ENCODE measurements at regions of chr1 and their contacts with region 1.

Region 1: GRCh38 chr1:110060034-110060661 is 10.3 kb downstream of the ALX3 start:
- DNase-seq: peak; percentile 81
- ATAC-seq: peak; percentile 85
- H3K4me3 Mint-ChIP-seq: no peak overlapping the region
- H3K27ac Mint-ChIP-seq: no peak overlapping the region
- H3K4me1 Mint-ChIP-seq: peaks cover 2% of the 10 kb centered on the region
- H3K27me3 Mint-ChIP-seq: no peaks in the 10 kb centered on the region

Region 2: DNA sequence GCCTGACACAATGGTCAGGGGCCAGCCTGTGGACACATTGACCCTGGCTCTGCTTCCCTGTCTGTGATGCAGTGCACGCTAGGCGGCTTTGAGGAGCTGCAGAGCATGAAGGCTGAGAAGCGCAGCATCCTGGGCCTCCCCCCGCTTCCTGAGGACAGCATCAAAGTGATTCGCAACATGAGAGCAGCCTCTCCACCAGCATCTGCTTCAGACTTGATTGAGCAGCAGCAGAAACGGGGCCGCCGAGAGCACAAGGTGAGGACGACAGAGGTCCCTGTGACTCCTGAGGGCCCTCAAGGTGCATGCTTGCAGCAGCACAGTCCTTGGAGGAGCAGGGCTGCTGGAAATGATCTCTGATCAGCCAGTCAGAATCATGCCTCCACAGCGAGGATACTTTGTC is 17.1 kb before region 1 on chr1:
- CTCF ChIA-PET with region 1: interaction called, 16 read pairs
- DNase-seq: no peak
- ATAC-seq: no peak
- H3K4me3 Mint-ChIP-seq: no peak overlapping the region
- H3K27ac Mint-ChIP-seq: no peak overlapping the region
- H3K4me1 Mint-ChIP-seq: no peaks in the 10 kb centered on the region
- H3K27me3 Mint-ChIP-seq: no peaks in the 10 kb centered on the region

Region 3: GRCh38 chr1:110082477-110082876 is 22.3 kb after region 1 on chr1:
- CTCF ChIA-PET with region 1: interaction called, 12 read pairs
- DNase-seq: no peak
- ATAC-seq: no peak
- H3K4me3 Mint-ChIP-seq: no peak overlapping the region
- H3K27ac Mint-ChIP-seq: no peak overlapping the region
- H3K4me1 Mint-ChIP-seq: peaks cover 15% of the 10 kb centered on the region
- H3K27me3 Mint-ChIP-seq: peaks cover 57% of the 10 kb centered on the region